Naive thymus-derived CD4-positive, alpha-beta T cell (primary cell): ENCODE measurements at regions of chr9 and their contacts with region 1.

Region 1: DNA sequence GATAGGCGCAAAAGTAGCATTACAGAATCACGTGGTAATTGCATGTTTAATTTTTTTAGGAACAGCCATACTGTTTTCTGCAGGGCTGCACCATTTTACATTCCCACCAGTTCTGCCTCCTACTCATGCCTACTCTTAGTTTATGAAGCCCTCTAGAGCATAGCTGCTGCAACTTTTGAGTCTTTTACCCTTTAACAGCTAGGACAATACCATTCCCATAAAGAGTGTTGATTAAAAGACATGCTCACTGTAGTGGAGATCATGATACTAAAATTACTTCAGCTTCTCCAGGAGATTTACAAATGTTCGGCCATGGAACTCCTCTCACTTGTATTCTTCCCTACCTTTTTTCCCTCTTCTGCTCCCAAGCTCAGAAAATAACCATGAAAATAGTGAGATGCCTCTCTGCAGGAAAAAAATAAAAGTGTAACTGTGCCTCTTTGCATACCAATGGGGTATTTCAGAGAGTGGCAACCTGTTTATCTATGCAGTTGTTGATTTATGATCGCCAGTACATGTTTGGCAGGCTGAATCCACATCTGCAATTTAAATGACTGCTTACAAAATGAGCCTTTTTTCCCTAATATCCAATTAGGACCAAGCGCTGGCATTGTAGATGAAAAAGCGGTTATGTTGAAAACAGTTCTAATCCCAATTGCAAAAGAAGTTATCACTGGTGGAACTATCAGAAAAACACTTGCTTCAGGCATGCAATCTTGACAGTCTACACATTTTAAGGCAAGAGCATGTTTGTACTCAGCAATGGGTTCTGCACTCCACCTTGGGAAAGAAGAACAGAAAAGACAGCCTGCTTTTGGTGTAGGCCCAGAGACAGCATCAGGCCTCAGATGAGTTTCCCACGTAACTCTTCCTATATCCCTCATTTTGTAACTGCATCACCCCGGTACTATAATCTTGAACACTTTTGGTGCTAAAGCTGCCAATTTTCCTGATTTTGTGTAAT is 131.1 kb downstream of the ADAMTSL1 start:
- DNase-seq: no peak
- ATAC-seq: no peak
- H3K4me3 ChIP-seq: no peak overlapping the region
- H3K4me3 Mint-ChIP-seq: no peak overlapping the region
- H3K27ac ChIP-seq: no peak overlapping the region
- H3K27ac Mint-ChIP-seq: no peak overlapping the region
- H3K4me1 ChIP-seq: no peaks in the 10 kb centered on the region
- H3K4me1 Mint-ChIP-seq: no peaks in the 10 kb centered on the region
- H3K27me3 ChIP-seq: no peaks in the 10 kb centered on the region
- H3K27me3 Mint-ChIP-seq: peaks cover 0 to 5% (median 4%) of the 10 kb centered on the region in 5 donors

Region 2: DNA sequence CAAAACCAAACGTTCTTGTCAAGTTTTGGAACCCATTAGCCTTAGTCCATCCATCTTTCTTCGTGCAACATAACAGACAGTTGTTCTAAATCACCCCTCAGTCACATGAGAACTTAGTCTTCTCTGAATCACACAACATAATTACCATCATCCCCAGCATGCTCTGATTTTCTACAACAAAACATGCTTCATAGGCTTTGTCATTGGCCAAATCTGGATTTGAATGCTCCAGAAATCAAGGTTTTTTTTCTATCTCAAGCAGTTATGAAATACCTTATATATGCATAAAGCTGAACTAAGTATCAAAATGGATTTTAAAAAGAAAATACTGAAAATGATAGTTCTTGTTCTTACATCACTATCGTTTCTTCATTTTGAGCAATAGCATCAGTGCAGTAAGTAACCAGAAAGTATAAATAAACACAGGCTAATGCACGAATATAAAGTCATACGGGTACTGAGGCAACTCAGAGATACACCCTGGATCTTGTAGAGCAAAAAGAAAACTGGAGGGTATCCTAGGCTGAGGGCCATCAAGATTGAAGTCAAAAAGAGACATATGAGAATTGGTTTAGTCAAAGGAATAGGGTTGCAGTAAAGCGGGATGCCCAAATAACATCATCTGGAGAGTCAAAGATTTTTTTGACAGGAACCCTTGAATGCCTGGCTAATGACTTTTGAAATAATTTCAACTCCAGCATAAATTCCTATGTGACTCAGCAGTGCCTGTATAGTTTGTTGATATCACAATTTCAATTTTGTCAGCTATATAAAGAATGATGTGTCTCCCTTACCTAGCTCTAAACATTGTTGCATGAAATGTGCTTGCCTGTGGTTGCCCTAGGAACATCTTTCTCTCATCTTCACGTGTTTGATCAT is 33.6 kb after region 1 on chr9:
- CTCF ChIA-PET with region 1: no interaction called
- POLR2A ChIA-PET with region 1: no interaction called
- intact Hi-C with region 1: loop called in 1 of 2 experiments (anchors 5 kb)
- DNase-seq: no peak
- ATAC-seq: no peak
- H3K4me3 ChIP-seq: no peak overlapping the region
- H3K4me3 Mint-ChIP-seq: no peak overlapping the region
- H3K27ac ChIP-seq: no peak overlapping the region
- H3K27ac Mint-ChIP-seq: no peak overlapping the region
- H3K4me1 ChIP-seq: no peaks in the 10 kb centered on the region
- H3K4me1 Mint-ChIP-seq: no peaks in the 10 kb centered on the region
- H3K27me3 ChIP-seq: no peaks in the 10 kb centered on the region
- H3K27me3 Mint-ChIP-seq: peaks cover 0 to 5% (median 0%) of the 10 kb centered on the region in 5 donors